Dendritic cell treated with granulocyte-macrophage colony-stimulating factor and Interleukin-4, amounts not matched to agents 40 ng/mL and 50 ng/mL, for 4 days (primary cell): ENCODE measurements at regions of chr10 and their contacts with region 1.

Region 1: DNA sequence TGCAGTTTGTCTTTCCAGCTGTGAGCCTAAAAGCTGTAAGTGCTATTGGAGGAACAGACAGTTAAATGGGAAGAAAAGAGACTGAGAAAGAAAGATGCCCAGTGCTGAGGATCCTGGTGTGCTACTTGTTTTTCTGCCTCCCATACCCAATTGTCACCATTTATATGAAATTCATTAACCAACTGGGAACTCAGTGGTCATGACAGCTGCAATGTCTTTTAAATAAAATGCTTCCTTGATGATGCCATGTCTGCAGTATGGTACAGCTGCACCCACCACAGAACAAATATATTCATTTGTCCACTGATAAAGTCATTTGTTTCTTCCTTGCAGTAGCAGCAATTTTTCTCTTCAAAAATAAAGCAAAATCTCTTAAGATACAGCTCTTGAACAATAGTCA is 15.6 kb upstream of the RTKN2 start:
- H3K4me3 Mint-ChIP-seq: no peak overlapping the region
- H3K27ac Mint-ChIP-seq: no peak overlapping the region
- H3K4me1 Mint-ChIP-seq: no peaks in the 10 kb centered on the region
- H3K27me3 Mint-ChIP-seq: no peaks in the 10 kb centered on the region

Region 2: GRCh38 chr10:62414359-62414758 is 130.1 kb after region 1 on chr10:
- intact Hi-C with region 1: loop called (anchors 10 kb)
- H3K4me3 Mint-ChIP-seq: no peak overlapping the region
- H3K27ac Mint-ChIP-seq: no peak overlapping the region
- H3K4me1 Mint-ChIP-seq: no peaks in the 10 kb centered on the region
- H3K27me3 Mint-ChIP-seq: peaks cover 25% of the 10 kb centered on the region